ENCODE measurements at regions of chr21 and their contacts with region 1.

Region 1: GRCh38 chr21:27423038-27423437 is 456.1 kb upstream of the ADAMTS5 start:
- DNase-seq: peak; percentile 92

Region 2: DNA sequence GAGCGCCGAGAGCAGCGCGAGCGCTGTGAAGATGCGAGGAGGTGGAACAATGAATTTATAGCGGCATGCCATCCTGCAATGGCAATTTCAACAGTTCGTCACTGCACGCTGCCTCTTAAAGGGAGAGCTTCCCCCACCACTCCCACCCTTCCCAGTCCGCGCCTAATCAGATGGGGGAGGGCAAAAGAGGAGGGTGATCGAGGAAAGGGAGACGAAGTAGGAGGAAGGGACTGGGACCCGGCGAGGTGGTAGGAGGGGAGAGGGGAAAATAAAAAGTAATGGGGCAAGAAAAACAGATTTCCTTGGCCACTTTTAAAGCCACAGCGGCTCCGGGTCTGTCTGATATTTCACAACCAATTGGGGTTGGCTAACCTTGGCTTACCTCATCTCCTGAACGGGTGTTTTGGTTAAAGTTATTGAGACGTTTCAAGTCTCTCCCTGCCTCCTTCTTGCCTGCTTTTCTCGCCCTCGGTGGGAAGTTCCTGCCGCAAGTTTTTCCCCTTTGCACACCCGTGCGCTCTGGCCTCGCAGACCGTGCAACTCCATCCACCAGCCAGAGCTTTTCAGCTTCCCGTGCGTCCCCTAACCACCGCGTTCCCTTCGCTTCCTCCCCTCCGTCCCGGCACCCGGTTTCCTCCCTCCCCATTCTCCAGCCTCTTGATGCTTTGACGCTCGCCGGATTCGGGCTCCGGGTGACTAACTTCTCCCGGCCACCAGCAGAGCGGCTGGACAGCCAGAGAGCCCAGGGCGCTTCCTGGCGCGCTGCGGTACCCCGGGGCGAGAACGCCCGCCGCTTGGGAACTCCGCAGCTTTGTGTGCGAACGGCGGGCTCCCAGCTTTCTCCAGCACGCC is 455.8 kb before region 1 on chr21 and contains the start of gene ADAMTS5:
- intact Hi-C with region 1: loop called in 1 of 2 experiments (anchors 10 kb)
- DNase-seq: peak; percentile 89
- total RNA-seq, gene ADAMTS5: 20.4 to 42.9 TPM

Region 3: GRCh38 chr21:27380303-27380702 is 42.7 kb before region 1 on chr21:
- intact Hi-C with region 1: no loop called
- DNase-seq: no peak